H1 (cell line): ENCODE measurements at regions of chr11 and their contacts with region 1.

Region 1: DNA sequence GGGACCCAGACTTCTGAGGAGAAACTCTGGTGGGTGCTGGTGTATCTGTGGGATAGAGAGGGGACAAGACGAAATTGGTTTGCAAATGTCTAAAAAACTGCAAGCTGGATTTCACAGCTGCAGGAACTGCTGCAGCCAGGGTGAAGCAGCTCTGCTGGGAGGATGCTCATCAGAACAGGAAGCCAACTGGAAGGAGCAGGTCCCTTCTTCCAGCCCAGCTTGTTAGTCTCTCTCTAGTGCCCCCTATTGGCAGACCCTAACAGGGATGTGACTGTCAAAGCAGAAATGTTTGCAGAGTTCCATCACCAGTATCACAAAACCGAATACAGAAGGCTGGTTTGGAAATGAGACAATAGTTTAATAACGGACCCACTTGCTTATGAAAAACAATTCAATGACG is 74.8 kb upstream of the SLC22A12 start:
- DNase-seq: no peak
- H3K4me3 ChIP-seq: no peak overlapping the region
- H3K27ac ChIP-seq: no peak overlapping the region
- H3K4me1 ChIP-seq: no peaks in the 10 kb centered on the region
- H3K27me3 ChIP-seq: peaks cover 0 to 19% (median 9%) of the 10 kb centered on the region in 4 experiments; a peak in 4 of 7 replicates
- CTCF ChIP-seq: peak; percentile 26 to 77 (median 52)
- EP300 ChIP-seq: no peak
- POLR2A ChIP-seq: no peak
- RAD21 ChIP-seq: peak; percentile 27 to 49; a peak in 3 of 4 replicates

Region 2: DNA sequence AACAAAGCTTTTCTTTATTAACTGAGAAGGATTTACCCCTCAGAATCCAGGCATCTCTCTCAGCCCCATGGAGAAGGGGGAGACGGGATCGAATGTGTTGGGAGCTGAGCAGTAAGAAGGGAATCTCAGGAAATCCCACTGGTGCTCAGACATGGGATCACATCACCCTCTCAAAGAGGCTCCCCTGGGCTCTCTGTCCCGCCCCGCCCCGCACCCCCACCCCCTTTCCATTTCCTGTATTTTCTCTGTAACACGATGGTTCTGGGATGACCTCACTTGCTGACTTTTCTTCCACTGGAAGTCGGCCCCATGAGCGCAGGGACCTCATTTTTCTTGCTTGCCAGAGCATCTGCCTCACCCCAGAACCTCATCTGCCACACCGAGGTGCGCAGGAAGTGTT is 57.2 kb before region 1 on chr11:
- CTCF ChIA-PET with region 1: no interaction called
- POLR2A ChIA-PET with region 1: no interaction called
- DNase-seq: no peak
- H3K4me3 ChIP-seq: no peak overlapping the region
- H3K27ac ChIP-seq: no peak overlapping the region
- H3K4me1 ChIP-seq: peaks cover 0 to 7% (median 4%) of the 10 kb centered on the region in 4 experiments; a peak in 5 of 7 replicates
- H3K27me3 ChIP-seq: peaks cover 0 to 11% (median 0%) of the 10 kb centered on the region in 4 experiments; a peak in 1 of 7 replicates
- CTCF ChIP-seq: no peak
- EP300 ChIP-seq: no peak
- POLR2A ChIP-seq: no peak
- RAD21 ChIP-seq: no peak

Region 3: GRCh38 chr11:64531906-64532312 is 15.7 kb after region 1 on chr11:
- CTCF ChIA-PET with region 1: interaction called, 57 read pairs
- POLR2A ChIA-PET with region 1: no interaction called
- DNase-seq: no peak
- H3K4me3 ChIP-seq: no peak overlapping the region
- H3K27ac ChIP-seq: no peak overlapping the region
- H3K4me1 ChIP-seq: no peaks in the 10 kb centered on the region
- H3K27me3 ChIP-seq: peaks cover 0 to 5% (median 1%) of the 10 kb centered on the region in 4 experiments; a peak in 3 of 7 replicates
- CTCF ChIP-seq: no peak
- EP300 ChIP-seq: no peak
- POLR2A ChIP-seq: no peak
- RAD21 ChIP-seq: no peak